ENCODE measurements at regions of chr14 and their contacts with region 1.

Region 1: DNA sequence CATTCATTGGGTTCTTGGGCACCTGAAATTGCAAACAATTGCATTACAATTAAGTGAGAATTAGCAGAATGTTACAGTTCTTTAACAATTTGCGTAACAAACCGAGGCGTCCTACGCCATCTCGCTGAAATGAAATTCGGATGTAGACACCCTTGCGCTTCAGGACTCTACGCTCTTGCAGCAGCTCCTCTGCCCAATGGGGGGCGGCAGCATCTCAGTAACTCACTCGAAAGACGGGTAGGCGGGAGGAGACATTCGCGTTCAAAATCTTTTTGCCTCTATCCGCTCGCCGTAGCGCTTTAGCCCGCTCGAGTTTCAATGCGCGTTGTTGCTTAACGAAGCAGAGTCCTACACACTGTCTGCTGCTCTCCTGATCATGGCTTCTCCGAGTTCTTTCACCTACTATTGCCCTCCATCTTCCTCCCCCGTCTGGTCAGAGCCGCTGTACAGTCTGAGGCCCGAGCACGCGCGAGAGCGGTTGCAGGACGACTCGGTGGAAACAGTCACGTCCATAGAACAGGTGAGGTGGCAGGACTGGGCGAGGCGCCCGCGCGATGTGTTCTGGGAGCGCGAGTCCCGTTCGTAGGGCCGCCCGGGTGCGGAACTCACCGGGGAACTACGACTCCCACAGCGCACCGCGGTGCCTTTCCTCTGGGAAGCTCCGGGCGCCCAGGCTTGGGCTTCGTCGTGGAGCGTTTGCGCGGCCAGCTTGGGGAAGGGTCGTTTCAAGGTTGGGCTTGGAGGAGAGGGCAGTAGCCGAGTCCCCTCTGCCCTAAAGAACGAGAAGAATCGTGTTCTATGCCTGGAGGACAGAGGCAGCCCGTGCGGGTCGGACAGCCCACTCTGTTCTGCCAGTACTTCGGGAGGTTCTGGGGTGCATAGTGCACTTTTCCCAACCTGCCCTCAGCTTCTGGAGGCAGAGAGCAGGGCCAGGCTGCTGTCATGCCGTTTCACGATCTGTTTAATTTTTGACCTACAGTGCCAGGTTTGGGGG is at the start of gene FNTB:
- DNase-seq: peak; percentile 95
- H3K4me3 Mint-ChIP-seq: peak within 1 kb of the TSS; percentile 86
- H3K27ac Mint-ChIP-seq: peak within 1 kb of the TSS; percentile 83
- H3K4me1 Mint-ChIP-seq: peaks cover 25% of the 10 kb centered on the region
- H3K27me3 Mint-ChIP-seq: no peaks in the 10 kb centered on the region
- CTCF ChIP-seq: no peak
- total RNA-seq, gene FNTB: 15.0 and 17.6 TPM in 2 replicates

Region 2: DNA sequence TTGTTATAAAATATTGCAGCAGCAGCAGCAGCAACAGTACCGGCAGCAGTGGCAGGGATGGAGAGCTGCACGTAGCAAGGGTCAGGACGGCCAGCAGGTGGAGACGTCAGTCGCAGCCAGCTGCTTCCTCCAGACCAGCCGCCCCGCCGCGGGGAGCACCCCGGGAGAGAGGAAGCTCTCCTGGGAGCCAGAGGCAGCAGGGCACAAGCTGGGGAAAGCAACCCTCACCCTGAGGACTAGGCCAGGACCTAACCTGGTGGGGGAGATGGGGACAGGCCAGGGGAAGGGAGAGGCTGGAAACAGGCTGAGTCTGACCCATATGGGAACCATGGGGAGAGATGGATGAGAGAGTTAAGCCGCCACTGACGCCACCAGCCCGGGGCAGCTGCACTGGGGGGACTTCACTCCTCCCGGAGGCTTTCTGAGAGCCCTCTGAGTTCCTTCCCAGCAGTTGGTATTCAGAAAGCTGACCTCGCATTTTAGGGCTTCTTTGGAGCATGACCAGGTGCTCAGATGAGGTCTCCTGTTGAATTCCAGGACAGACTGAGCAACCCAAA is 163.5 kb before region 1 on chr14:
- CTCF ChIA-PET with region 1: no interaction called
- intact Hi-C with region 1: loop called (anchors 5 kb)
- DNase-seq: peak; percentile 86
- H3K4me3 Mint-ChIP-seq: peak overlapping the region; percentile 36
- H3K27ac Mint-ChIP-seq: no peak overlapping the region
- H3K4me1 Mint-ChIP-seq: peaks cover 8% of the 10 kb centered on the region
- H3K27me3 Mint-ChIP-seq: peaks cover 92% of the 10 kb centered on the region
- CTCF ChIP-seq: peak; percentile 76

Region 3: DNA sequence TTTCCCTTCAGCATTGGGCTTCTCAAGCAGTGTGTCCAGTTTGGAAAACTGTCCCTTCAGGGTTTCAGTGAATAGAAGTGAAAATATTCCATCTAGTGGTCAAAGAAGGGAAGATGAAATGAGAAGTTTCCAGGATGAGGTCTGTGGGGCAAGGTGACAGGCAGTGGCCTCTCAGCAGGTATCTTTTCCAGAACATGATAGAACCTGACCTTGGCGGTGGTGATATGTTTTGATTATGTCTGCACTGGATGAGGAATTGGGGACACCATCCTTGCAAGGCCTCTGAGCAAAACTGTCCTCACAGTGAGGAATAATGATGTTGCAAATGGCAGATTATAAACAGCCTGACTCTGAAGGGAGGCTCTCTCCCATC is 49.1 kb before region 1 on chr14:
- CTCF ChIA-PET with region 1: interaction called, 4 read pairs
- intact Hi-C with region 1: loop called (anchors 2 kb)
- DNase-seq: no peak
- H3K4me3 Mint-ChIP-seq: peak overlapping the region; percentile 76
- H3K27ac Mint-ChIP-seq: peak overlapping the region; percentile 92
- H3K4me1 Mint-ChIP-seq: peaks cover 54% of the 10 kb centered on the region
- H3K27me3 Mint-ChIP-seq: no peaks in the 10 kb centered on the region
- CTCF ChIP-seq: no peak

Region 4: DNA sequence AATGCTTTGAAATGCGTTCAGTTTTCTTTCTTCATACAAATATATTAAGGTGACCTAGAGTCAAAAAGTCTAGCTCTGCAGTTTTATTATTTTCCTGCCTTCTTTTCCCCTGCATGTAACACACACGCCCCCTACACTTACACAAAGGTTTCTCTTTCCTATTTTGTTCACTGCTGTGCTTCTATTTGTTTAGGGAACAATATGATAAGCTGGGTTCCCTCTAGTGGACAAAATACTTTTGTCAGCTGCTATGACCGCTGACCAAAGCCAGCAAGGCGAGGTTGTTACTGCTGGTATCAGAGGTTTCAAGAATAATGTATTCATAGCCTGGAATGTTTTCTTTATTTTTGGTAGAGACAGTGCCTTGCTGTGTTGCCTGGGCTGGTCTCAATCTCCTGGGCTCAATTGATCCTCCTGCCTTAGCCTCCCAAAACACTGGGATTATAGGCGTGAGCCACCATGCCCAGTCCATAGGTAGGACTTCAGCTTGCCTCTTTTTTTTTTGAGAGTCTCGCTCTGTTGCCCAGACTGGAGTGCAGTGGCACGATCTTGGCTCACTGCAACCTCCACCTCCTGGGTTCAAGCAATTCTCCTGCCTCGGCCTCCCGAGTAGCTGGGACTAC is 33.2 kb after region 1 on chr14:
- CTCF ChIA-PET with region 1: interaction called, 33 read pairs
- intact Hi-C with region 1: loop called (anchors 1 kb)
- DNase-seq: peak; percentile 50
- H3K4me3 Mint-ChIP-seq: no peak overlapping the region
- H3K27ac Mint-ChIP-seq: no peak overlapping the region
- H3K4me1 Mint-ChIP-seq: no peaks in the 10 kb centered on the region
- H3K27me3 Mint-ChIP-seq: no peaks in the 10 kb centered on the region
- CTCF ChIP-seq: peak; percentile 28

Region 5: DNA sequence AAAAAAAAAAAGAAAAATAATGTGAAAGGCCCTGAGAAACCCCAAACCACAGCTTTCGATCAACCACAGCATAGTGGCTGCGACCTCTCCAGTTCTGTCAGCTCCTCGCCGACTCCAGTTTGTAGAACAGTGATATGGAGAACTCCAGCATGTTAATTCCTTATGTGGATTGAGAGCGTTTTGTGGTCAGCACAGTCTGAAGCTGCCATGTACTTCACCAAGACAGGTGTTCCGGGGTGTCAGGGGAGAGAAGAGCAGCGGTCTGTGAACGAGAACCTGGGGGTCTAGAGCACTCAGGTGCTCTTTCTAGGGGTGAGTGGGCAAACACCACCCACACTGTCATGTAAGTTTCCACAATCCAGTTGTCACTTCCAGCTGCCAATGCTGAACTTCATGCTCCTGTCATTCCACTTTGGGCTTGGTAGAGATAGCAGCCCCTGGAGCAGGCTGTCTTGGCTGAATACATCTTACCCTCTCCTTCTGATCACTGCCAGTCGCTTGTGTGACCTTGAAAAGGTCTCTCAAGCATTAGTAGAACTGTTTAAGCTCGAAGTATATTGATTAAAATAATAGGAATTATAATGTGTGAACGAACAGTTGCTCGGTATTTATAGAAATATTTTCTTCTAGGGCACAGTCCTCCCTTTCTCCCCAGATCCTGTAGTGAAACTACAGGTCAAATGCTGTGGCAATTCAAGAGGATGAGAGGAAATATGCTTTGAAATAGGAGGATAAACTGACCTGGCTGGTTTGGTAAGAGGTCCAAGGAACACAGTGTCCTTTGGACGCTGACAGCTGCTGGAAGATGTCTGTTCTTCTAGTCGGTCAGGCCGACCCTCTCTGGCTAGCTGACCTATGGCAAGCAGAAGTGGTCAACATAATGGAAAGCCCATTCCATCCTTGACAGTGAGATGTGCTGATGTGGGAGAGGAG is 131.2 kb after region 1 on chr14:
- CTCF ChIA-PET with region 1: no interaction called
- intact Hi-C with region 1: no loop called
- DNase-seq: peak; percentile 6
- H3K4me3 Mint-ChIP-seq: no peak overlapping the region
- H3K27ac Mint-ChIP-seq: no peak overlapping the region
- H3K4me1 Mint-ChIP-seq: peaks cover 12% of the 10 kb centered on the region
- H3K27me3 Mint-ChIP-seq: no peaks in the 10 kb centered on the region
- CTCF ChIP-seq: no peak

Measured in Calu3 (cell line).